ENCODE measurements at regions of chr1 and their contacts with region 1.

Region 1: DNA sequence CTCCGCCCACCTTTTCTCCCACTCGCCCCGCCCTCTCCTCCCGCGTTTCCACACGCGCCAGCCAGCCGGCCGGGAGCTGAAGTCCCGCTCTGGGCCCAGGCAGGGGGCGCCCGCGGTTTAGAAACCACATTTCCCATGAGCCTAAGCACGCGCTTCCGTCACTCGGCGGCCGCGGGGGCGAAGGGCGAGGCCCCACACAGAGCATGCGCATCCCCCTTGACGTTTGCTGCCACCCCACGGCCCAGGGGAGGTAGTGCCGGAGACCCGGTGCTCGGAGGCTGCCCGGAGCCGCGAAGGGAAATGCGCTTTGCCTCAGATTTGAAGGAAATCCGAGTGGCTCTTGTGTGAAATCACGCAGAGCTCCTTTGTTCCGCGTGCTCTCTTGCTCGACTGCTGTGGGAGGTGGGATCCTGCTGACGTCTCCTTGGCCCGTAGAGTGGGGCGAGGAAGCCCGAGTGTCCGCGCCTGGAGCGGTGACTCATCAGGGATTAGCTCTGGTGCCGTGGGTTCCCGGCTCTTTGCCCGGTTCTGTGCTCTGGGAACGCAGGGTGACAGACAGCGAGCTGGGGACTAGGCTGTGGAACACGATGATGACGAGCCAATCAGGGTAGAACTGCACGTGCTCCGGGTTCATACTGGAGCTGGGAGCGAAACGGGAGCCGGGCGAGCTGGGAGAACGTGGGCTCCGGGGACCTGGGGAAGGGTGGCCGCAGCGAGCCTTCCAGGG is 407 bp upstream of the B3GALNT2 start:
- DNase-seq: peak; percentile 98
- H3K4me3 Mint-ChIP-seq: peak overlapping the region; percentile 92
- H3K27ac Mint-ChIP-seq: peak overlapping the region; percentile 97
- H3K4me1 Mint-ChIP-seq: peaks cover 41% of the 10 kb centered on the region
- H3K27me3 Mint-ChIP-seq: peaks cover 16% of the 10 kb centered on the region

Region 2: DNA sequence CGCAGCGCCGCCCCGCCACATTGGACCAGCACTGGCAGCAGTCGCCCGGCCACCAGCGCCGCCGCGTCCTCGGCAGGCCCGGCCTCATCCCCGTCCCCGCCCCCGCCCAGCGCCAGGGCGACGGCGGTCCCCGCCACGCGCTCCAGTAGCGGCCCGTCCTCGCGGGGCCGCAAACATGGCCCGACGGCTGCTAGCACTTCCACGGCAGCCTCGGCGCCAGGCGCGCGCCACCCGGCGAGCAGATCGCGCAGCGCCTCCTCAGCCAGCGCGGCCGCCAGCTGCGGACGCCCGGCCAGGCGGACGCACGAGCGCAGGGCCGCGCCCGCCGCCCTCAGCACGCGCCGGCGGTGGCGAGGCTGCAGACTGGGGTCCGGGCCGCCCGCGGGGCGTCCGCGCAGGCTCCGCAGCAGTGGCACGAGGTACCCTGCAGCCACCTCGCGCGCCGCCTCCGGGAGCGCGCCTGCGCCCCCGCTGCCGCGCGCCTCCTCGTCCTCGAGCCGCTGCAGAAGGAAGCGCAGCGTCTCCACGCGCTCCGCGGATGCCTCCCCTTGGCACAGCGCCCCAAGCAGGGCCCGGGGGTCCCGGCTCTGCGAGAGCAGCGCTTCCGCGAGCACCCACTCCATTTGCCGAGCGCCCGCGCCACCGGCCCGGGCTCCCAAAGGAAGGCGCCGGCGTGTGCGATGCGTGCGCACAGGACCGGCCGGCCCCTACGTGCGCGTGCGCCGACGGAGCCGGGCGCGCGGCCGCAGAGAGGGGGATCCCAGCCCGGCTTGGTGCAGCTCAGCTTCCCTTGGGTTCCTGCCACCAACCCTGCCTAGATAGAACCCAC is 1026.0 kb before region 1 on chr1 and contains the start of gene TARBP1:
- intact Hi-C with region 1: loop called (anchors 1 kb)
- DNase-seq: peak; percentile 76
- H3K4me3 Mint-ChIP-seq: peak within 1 kb of the TSS; percentile 90
- H3K27ac Mint-ChIP-seq: peak within 1 kb of the TSS; percentile 75
- H3K4me1 Mint-ChIP-seq: peaks cover 47% of the 10 kb centered on the region
- H3K27me3 Mint-ChIP-seq: peaks cover 17% of the 10 kb centered on the region
- total RNA-seq, gene TARBP1: 71.7 and 78.9 TPM in 2 replicates

Region 3: GRCh38 chr1:235253219-235253962 is 251.3 kb before region 1 on chr1:
- intact Hi-C with region 1: loop called (anchors 5 kb)
- DNase-seq: peak; percentile 47
- H3K4me3 Mint-ChIP-seq: no peak overlapping the region
- H3K27ac Mint-ChIP-seq: no peak overlapping the region
- H3K4me1 Mint-ChIP-seq: peaks cover 37% of the 10 kb centered on the region
- H3K27me3 Mint-ChIP-seq: no peaks in the 10 kb centered on the region

Region 4: GRCh38 chr1:235697508-235697907 is 192.8 kb after region 1 on chr1:
- intact Hi-C with region 1: loop called (anchors 1 kb)
- DNase-seq: no peak
- H3K4me3 Mint-ChIP-seq: no peak overlapping the region
- H3K27ac Mint-ChIP-seq: peak overlapping the region; percentile 91
- H3K4me1 Mint-ChIP-seq: peaks cover 20% of the 10 kb centered on the region
- H3K27me3 Mint-ChIP-seq: no peaks in the 10 kb centered on the region

Region 5: GRCh38 chr1:236064674-236065508 is 560.2 kb after region 1 on chr1 and contains the start of gene NID1:
- intact Hi-C with region 1: loop called (anchors 5 kb)
- DNase-seq: peak; percentile 11
- H3K4me3 Mint-ChIP-seq: peak within 1 kb of the TSS; percentile 61
- H3K27ac Mint-ChIP-seq: no peak within 1 kb of the TSS
- H3K4me1 Mint-ChIP-seq: peaks cover 29% of the 10 kb centered on the region
- H3K27me3 Mint-ChIP-seq: peaks cover 53% of the 10 kb centered on the region
- total RNA-seq, gene NID1: 0.44 and 0.65 TPM in 2 replicates

Region 6: DNA sequence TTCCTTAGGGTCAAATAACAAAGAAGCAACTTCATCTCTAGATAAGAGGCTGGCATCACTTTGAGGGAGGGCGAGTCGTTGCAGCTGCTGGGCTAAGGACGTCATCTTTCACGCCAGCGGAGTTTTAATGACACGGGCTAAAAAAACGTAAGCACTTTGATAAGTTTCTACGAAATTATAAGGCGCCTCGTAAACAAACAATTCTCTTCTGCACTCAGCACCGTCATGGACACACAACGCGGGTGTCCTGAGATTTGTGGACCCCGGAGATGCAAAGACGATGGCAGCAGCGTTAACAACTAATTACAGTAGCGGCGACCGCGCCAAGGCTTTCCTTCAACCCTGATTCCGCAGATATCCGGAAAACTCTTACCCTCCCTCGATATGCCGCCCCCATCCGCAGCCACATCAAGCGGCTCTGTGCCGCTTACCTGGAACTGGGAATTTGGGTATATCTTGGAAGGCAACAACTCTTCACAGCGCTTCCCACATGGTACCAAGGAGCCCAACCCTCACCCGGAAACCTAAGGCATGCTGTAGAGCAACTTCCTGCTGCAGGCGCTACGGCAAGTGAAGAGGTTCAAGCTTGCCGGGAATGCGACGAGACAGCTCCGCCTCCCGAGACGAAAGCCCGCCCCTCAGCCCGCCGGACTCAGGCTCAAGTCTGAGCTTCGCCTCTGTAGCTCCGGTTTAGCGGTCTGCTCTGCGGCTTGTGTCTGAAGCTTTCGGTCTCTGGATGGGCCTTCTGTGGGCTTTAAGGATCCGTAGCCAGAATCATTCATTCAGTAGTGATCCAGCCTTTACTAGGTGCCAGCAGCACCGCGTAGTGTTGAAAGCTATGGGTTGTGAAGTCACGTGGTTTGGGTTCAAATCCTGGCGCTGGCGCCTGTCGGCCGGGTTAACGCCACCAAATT is 1099.6 kb after region 1 on chr1 and contains the start of gene HEATR1:
- intact Hi-C with region 1: loop called (anchors 1 kb)
- DNase-seq: peak; percentile 85
- H3K4me3 Mint-ChIP-seq: peak within 1 kb of the TSS; percentile 98
- H3K27ac Mint-ChIP-seq: peak within 1 kb of the TSS; percentile 90
- H3K4me1 Mint-ChIP-seq: peaks cover 37% of the 10 kb centered on the region
- H3K27me3 Mint-ChIP-seq: peaks cover 8% of the 10 kb centered on the region
- total RNA-seq, gene HEATR1: 83.6 and 85.2 TPM in 2 replicates

Measured in activated T-helper 1 cell treated with anti-CD3 and anti-CD28 coated beads, Interleukin-12 subunit alpha, Interleukin-12 subunit beta, Interleukin-2, Interleukin-4 antibody, amounts not matched to agents 30 ng/mL and 10 ng/mL and 1 ng/mL, durations not matched to agents 14 hours and 24 hours and 36 hours (primary cell).